HCT116 (cell line): ENCODE measurements at regions of chr7 and their contacts with region 1.

Region 1: DNA sequence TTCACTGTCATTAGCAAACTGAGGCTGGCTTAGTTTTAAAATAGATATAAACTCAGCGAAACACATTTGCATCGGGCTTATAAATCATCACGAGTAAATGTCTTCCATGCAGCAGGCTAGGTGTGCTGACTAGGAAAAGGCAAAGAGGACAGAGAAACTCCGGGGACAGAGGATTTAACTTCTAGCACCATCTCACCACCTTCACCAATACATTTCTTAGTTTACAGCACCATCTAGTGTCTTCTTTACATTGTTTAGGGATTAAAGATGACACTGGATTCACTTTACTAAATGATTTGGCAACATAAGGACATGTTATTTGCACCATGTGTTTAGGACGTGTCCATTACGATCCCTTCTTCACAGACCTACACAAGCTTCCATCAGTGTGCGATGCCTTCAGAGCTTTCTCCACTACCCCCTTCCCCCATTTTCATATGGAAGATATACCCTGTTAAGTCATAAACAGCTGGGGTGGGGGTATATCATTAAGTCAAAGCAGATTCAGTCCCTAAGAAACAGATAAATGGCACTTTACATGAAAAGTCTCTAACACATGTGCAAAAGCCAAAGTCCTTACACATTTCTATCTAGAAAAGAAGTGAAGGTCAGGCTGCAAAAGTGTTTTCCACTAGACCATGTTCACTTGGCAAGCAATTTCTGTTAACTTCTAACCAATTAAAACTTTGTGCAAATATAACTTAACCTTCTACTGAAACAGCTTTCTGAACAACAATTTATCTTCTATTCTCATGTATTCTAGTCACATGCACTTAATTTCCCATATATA is 103.3 kb downstream of the GRB10 start:
- DNase-seq: peak; percentile 18
- ATAC-seq: peak; percentile 82
- H3K4me3 ChIP-seq: no peak overlapping the region
- H3K27ac ChIP-seq: no peak overlapping the region
- H3K4me1 ChIP-seq: no peaks in the 10 kb centered on the region
- H3K27me3 ChIP-seq: no peaks in the 10 kb centered on the region
- CTCF ChIP-seq: peak in 2 of 3 experiments; percentile 39 to 42; a peak in 2 of 6 replicates
- POLR2A ChIP-seq: no peak
- RAD21 ChIP-seq: peak; percentile 75

Region 2: DNA sequence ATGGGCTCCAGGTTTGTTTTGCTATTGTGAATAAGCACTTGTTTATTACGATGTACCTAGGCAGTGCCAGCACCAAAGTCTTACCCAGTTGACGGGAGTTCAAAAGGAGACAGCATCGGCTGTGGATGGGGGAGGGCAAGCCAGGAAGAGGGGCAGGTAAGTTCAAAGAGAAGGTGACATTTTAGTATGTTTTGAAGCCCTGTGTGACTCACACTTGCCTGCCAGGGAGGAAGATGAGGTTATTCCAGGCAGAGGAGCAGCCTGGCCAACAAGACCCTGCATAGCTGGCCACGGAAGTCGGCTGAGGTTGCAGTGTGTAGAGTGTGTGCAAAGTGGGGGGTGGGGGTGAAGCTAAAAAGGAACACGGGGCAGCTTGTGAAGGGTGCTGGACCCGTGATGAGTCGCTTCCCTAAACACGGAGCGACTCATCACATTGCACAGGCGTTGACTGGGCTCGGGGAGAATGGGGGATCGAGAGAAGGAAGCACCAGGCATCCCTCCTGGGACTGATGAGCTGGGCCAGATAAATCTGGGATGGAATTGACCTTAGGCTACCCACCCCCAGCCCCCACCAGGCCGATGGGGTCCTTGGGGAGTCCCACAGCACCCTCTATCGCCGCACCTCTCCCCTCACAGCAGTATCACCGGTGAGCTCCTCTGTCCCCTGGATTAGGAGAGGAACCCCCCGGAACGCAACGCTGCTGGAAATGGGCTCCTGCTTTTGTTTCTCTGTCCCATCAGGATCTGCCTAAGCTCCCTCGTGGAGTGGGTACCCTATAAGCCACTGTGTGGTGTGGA is 472.8 kb before region 1 on chr7:
- CTCF ChIA-PET with region 1: interaction called, 4 read pairs
- POLR2A ChIA-PET with region 1: no interaction called
- RAD21 ChIA-PET with region 1: no interaction called
- intact Hi-C with region 1: loop called (anchors 5 kb)
- DNase-seq: peak; percentile 38
- ATAC-seq: peak; percentile 76
- H3K4me3 ChIP-seq: peak overlapping the region in 1 of 2 experiments; percentile 43; a peak in 2 of 4 replicates
- H3K27ac ChIP-seq: no peak overlapping the region; the same call in 1 of the 2 replicates
- H3K4me1 ChIP-seq: peaks cover 18 to 38% of the 10 kb centered on the region in 2 experiments; a peak in 3 of 4 replicates
- H3K27me3 ChIP-seq: no peaks in the 10 kb centered on the region
- CTCF ChIP-seq: no peak
- POLR2A ChIP-seq: no peak
- RAD21 ChIP-seq: no peak

Region 3: DNA sequence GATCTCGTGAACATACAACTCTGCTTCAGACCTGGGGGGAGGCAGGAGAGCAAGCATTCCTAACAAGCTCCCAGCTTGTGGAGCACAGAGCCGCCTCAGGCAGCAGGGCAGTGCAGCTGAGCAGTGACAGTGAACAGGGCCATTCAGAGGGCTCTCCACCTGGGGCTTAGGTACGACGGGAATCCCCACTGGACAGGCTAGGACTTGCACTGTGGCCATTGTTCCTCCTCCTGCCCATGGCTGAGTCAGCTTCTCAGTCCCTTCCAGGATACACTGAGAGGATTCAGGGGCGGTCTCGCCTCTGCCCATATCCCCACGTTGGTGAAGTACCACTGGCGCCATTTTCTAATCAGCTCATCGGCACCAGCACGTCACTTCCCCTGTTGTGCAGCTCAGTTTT is 300.3 kb before region 1 on chr7:
- CTCF ChIA-PET with region 1: no interaction called
- POLR2A ChIA-PET with region 1: no interaction called
- RAD21 ChIA-PET with region 1: no interaction called
- intact Hi-C with region 1: no loop called
- DNase-seq: no peak
- ATAC-seq: peak; percentile 79
- H3K4me3 ChIP-seq: no peak overlapping the region
- H3K27ac ChIP-seq: no peak overlapping the region
- H3K4me1 ChIP-seq: no peaks in the 10 kb centered on the region
- H3K27me3 ChIP-seq: peaks cover 9% of the 10 kb centered on the region
- CTCF ChIP-seq: no peak
- POLR2A ChIP-seq: no peak
- RAD21 ChIP-seq: no peak